Gastrocnemius medialis (tissue), 4 donors: ENCODE measurements at regions of chr20 and their contacts with region 1.

Region 1: GRCh38 chr20:59222253-59223181 is 58.9 kb downstream of the ZNF831 start:
- DNase-seq: peak; percentile 36 to 47
- ATAC-seq: peak; percentile 73 to 76
- H3K4me3 ChIP-seq: peak overlapping the region; percentile 54 to 85 (median 60)
- H3K27ac ChIP-seq: peak overlapping the region in 3 of 4 donors; percentile 30 to 51 (median 47)
- H3K4me1 ChIP-seq: peaks cover 10 to 16% of the 10 kb centered on the region in 2 donors
- H3K27me3 ChIP-seq: peaks cover 0 to 6% (median 5%) of the 10 kb centered on the region in 3 donors
- CTCF ChIP-seq: peak; percentile 82 to 98 (median 83)
- POLR2A ChIP-seq: no peak

Region 2: GRCh38 chr20:58950603-58951002 is 271.9 kb before region 1 on chr20:
- in situ Hi-C with region 1: loop called in 1 of 4 experiments (anchors 10 kb)
- intact Hi-C with region 1: no loop called
- DNase-seq: no peak
- ATAC-seq: no peak
- H3K4me3 ChIP-seq: no peak overlapping the region
- H3K27ac ChIP-seq: no peak overlapping the region
- H3K4me1 ChIP-seq: no peaks in the 10 kb centered on the region
- H3K27me3 ChIP-seq: no peaks in the 10 kb centered on the region
- CTCF ChIP-seq: no peak
- POLR2A ChIP-seq: no peak

Region 3: DNA sequence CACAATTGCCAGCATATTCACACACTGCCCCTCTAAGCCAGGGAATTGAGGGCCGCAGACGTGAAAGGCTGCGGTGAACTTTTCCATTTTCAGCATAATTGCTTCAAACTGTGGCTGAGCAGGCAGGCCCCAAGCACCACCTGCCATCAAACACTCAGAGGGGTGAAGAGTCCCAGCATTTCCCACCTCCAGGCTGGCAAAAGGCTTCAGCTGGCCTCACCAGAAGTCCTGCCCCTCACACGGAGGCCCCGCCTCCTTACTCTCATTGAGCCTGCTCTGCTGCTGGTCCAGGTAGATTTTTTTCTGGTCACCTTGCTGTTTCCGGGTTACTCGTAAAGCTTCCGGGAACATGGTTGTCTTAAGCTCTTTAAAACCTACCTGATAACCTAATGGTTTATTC is 127.9 kb before region 1 on chr20:
- in situ Hi-C with region 1: loop called in 3 of 4 experiments (anchors 5 to 10 kb)
- intact Hi-C with region 1: loop called (anchors 2 kb)
- DNase-seq: no peak
- ATAC-seq: no peak
- H3K4me3 ChIP-seq: no peak overlapping the region
- H3K27ac ChIP-seq: no peak overlapping the region
- H3K4me1 ChIP-seq: no peaks in the 10 kb centered on the region
- H3K27me3 ChIP-seq: no peaks in the 10 kb centered on the region
- CTCF ChIP-seq: no peak
- POLR2A ChIP-seq: no peak

Region 4: GRCh38 chr20:59453759-59454560 is 231.4 kb after region 1 on chr20:
- in situ Hi-C with region 1: no loop called
- intact Hi-C with region 1: no loop called
- DNase-seq: no peak
- ATAC-seq: no peak
- H3K4me3 ChIP-seq: no peak overlapping the region
- H3K27ac ChIP-seq: no peak overlapping the region
- H3K4me1 ChIP-seq: no peaks in the 10 kb centered on the region
- H3K27me3 ChIP-seq: peaks cover 0 to 6% (median 0%) of the 10 kb centered on the region in 3 donors
- CTCF ChIP-seq: no peak
- POLR2A ChIP-seq: no peak